ENCODE measurements at regions of chr2 and their contacts with region 1.

Region 1: DNA sequence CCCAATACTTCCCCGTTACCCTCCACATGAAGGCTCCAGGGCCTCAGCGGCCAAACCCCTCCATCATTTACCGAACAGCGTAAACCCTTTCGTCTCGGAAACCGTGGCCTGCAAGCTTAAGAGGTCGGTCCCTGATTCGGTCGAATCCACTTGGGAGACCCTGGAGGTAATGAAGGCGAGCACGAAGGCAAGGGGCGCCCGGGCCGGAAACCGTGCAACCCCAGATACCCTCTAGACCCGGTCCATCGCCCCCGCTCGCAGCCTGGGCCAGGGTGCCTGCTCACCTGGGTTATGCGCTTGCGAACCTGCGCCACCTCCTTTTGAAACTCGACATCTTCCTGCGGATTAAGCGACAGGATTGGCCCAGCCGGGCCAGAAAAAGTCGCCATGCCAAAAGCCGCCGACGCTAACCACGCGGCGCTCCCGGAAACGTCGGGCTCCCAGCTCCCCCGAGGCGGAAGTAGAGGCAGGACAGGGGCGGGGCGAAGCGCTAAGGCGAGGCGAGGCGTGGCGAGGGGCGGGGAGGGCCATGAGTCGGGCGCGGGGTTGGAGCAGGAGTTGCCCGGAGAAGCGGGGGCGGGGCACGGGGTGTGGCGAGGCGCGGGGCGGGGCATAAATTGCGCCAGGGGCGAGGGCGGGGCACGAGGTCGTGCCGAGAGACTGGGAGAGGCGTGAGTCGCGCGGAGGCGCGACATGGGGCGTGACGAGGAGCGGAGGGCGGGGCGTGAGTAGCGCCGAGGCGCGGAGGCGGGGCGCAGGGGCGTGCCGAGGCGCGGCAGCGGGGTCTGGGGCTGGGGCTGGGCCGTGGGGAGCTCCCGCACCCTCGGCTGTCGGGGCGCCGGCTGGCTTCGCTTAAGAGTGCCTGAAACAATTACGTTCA is at the start of gene NIFK:
- DNase-seq: peak; percentile 96 to 99 (median 98)
- H3K4me3 ChIP-seq: peak within 1 kb of the TSS; percentile 51 to 97 (median 90)
- H3K27ac ChIP-seq: peak within 1 kb of the TSS in 56 of 59 donors; percentile 7 to 89 (median 76)
- H3K27me3 ChIP-seq: no peaks in the 10 kb centered on the region
- CTCF ChIP-seq: peak in 19 of 56 donors; percentile 0 to 42 (median 17)
- total RNA-seq, gene NIFK: 16.8 to 47.3 (median 29.2) TPM

Region 2: DNA sequence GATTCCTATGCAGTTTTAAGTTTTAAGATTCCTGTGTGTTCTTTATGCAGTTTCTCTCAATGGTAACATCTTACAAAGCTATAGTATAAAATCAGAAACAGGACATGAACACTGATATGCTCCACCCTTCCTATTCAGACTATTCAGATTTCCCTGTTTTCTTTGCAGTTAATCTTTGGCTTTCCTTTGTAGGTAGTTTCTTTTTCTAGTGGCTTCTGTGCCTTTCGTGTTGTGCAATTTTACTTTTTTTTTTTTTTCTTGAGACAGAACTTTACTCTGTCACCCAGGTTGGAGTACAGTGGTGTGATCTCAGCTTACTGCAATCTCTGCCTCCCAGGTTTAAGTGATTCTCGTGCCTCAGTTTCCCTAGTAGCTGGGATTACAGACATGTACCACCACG is 300.9 kb before region 1 on chr2:
- intact Hi-C with region 1: no loop called
- DNase-seq: no peak
- H3K4me3 ChIP-seq: no peak overlapping the region
- H3K27ac ChIP-seq: no peak overlapping the region
- H3K27me3 ChIP-seq: no peaks in the 10 kb centered on the region
- CTCF ChIP-seq: no peak

Region 3: DNA sequence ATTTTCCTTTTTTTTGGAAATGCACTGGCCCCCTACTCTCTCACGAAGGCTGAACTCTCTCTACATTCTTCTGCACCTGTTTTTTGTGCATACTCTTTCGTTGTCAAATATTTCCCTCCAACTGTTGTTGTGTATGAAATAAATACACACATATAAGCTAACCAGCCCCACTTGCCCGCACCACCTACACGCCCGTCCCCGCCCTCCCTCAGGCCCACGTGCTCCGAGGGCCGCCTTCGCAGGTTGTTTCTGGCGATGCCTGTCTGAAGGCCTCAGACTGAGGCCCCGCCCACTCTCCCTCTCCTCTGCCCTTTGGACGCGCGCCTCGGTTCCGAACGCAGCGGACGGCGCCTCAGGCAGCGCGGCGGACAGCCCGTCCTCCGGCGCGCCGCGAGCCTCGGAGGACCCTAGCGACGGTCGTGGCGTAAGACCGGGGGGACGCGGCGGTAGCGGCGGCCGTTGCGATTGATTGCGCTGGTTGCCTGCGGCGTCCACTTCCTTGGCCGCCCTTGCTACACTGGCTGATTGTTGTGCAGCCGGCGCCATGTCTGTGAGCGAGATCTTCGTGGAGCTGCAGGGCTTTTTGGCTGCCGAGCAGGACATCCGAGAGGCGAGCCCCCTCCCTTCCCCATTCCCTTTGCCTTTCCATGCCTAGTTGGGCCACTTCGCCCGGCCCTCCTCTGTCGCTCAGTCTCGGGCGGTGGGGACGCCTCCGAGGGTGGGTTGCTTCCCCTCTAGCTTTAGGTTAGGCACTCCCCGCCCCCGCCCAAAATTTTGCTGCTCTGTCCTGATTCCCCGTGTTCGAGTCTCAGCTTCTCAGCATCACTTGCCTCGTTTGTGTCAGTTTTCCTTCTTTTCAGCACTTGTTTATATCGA is 18.8 kb after region 1 on chr2 and contains the start of gene TSN:
- intact Hi-C with region 1: loop called (anchors 1 to 2 kb)
- DNase-seq: peak; percentile 94 to 97 (median 97)
- H3K4me3 ChIP-seq: peak within 1 kb of the TSS; percentile 70 to 100 (median 94)
- H3K27ac ChIP-seq: peak within 1 kb of the TSS in 53 of 59 donors; percentile 12 to 90 (median 73)
- H3K27me3 ChIP-seq: no peaks in the 10 kb centered on the region
- CTCF ChIP-seq: peak in 30 of 56 donors; percentile 5 to 62 (median 30)
- total RNA-seq, gene TSN: 42.4 to 82.9 (median 58.1) TPM

Region 4: GRCh38 chr2:121849236-121849635 is 112.5 kb after region 1 on chr2:
- intact Hi-C with region 1: no loop called
- DNase-seq: no peak
- H3K4me3 ChIP-seq: no peak overlapping the region
- H3K27ac ChIP-seq: no peak overlapping the region
- H3K27me3 ChIP-seq: peaks cover 0 to 5% (median 0%) of the 10 kb centered on the region in 45 donors
- CTCF ChIP-seq: no peak